ENCODE measurements at regions of chr10 and their contacts with region 1.

Region 1: GRCh38 chr10:96513698-96514561 is at the start of gene TLL2:
- DNase-seq: peak; percentile 91 to 94
- ATAC-seq: peak; percentile 93 to 95 (median 94)
- H3K4me3 ChIP-seq: peak within 1 kb of the TSS; percentile 76
- H3K27ac ChIP-seq: peak within 1 kb of the TSS; percentile 58
- H3K4me1 ChIP-seq: peaks cover 19% of the 10 kb centered on the region
- H3K27me3 ChIP-seq: no peaks in the 10 kb centered on the region
- CTCF ChIP-seq: peak; percentile 71
- total RNA-seq, gene TLL2: 0.30 to 0.41 (median 0.33) TPM

Region 2: GRCh38 chr10:96306516-96306915 is 207.4 kb before region 1 on chr10:
- intact Hi-C with region 1: no loop called
- DNase-seq: peak; percentile 29 to 73
- ATAC-seq: peak; percentile 44 to 80 (median 63)
- H3K4me3 ChIP-seq: no peak overlapping the region
- H3K27ac ChIP-seq: no peak overlapping the region
- H3K4me1 ChIP-seq: no peaks in the 10 kb centered on the region
- H3K27me3 ChIP-seq: peaks cover 0 to 3% (median 2%) of the 10 kb centered on the region in 3 donors
- CTCF ChIP-seq: no peak

Region 3: DNA sequence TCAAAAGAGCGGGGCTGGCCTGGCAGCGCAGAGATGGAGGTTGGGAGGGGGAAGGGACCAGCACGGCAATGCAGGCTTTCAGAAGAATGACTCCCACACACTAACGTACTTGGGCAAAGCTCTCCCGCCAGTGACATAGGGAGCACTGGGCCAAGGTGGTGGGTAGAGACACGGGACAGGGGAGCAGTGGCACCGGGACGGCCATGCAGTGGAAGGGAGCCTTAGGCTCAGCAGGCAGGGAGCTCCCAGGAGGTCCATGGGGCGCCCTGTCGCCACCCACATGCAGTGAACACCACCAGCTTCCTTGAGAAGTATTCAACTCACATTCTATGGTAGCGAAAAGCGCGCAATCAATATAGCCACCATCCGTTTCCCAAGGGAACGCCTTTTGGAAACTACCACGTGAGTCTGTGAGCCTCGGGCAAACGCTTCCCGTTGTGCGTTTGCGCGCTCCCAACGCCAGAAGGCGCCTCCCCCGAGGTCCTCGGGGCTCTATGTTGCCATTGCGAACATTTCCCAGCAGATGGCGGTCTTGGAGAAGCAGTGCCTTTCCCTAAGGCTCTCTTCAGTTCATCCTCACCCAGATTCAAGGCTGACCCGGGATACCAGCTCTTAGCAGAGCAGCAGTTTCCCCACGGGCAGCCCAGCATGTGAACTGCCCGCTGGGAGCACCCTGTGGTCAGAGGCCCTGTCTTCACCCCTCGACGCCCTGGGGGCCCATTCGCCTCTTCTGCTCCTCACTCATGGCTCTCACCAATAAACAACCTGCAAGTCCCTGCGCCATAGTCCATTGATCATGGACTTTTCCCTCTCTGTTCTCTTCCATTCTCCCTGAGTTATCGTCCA is 138.7 kb before region 1 on chr10:
- intact Hi-C with region 1: loop called in 1 of 2 experiments (anchors 5 kb)
- DNase-seq: peak; percentile 85 to 92
- ATAC-seq: peak; percentile 92 to 98 (median 95)
- H3K4me3 ChIP-seq: peak overlapping the region; percentile 69
- H3K27ac ChIP-seq: no peak overlapping the region
- H3K4me1 ChIP-seq: no peaks in the 10 kb centered on the region
- H3K27me3 ChIP-seq: no peaks in the 10 kb centered on the region
- CTCF ChIP-seq: peak; percentile 98

Region 4: DNA sequence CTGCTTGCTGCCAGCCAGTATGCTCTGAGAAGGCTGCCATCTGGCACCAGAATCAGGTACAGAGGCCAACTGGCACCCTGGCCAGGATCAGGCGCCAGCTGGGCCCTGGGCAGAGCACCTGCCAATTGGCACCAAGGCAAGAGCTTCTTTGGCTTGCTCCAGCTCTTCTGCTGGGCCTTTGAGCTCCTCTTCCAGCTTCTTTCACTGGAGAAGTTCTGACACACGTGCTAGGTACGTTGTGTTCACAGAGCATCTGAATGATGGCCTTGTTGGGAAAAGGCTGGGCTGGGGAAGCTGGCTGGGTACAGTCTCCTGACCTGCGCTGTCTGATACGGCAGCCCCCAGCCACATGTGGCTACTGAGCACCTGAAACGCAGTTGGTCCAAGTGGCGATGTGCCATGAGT is 123.5 kb before region 1 on chr10:
- intact Hi-C with region 1: loop called (anchors 5 kb)
- DNase-seq: peak; percentile 72 to 93
- ATAC-seq: peak; percentile 96 to 99 (median 98)
- H3K4me3 ChIP-seq: no peak overlapping the region
- H3K27ac ChIP-seq: no peak overlapping the region
- H3K4me1 ChIP-seq: peaks cover 13% of the 10 kb centered on the region
- H3K27me3 ChIP-seq: peaks cover 0 to 2% (median 0%) of the 10 kb centered on the region in 3 donors
- CTCF ChIP-seq: no peak

Region 5: DNA sequence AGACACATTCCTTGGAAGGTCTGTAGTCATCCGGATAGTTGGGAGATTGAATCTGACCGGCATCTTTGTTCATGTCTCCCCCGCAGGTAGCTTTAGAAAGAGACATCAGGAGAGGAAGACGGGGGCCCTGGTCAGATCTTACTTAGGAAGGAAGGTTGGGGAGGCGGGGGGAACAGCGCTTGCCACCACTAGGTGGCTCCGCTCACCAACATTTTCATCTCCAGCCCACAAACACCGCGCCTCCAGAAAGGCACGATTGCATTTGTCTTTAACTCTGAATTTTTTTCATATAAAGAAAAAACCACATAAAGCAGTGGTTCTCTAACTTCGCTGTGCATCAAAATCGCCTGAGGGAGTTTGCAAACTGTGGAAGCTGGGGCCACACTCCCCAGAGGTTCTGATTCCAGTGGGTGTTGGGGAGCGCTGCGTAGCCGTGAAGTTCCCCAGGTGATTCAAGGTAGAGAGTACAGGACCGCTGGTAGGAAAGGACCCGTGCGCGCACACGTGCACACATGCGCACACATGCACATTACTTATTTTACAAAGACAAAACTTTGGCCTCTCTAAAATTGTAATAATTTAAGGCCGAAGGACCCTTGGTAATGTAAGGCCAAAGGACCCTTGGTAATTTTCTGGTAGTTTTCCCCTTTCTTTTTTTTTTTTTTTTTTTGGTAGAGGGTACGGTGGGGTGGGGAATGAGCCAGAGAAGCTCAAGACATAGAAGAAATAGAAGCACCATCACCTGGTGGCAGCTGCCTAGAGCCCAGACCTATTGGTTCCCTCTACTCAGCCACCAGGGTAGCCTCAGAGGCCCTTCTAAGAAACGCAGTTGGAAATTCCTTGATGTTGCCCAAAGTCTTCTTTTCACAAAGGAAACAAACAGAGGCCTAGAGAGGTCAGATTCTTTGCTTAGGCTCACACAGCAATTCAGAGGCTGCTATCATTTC is 117.7 kb before region 1 on chr10:
- intact Hi-C with region 1: loop called (anchors 5 kb)
- DNase-seq: peak; percentile 56 to 80
- ATAC-seq: peak; percentile 75 to 94 (median 83)
- H3K4me3 ChIP-seq: no peak overlapping the region
- H3K27ac ChIP-seq: no peak overlapping the region
- H3K4me1 ChIP-seq: no peaks in the 10 kb centered on the region
- H3K27me3 ChIP-seq: peaks cover 0 to 2% (median 0%) of the 10 kb centered on the region in 3 donors
- CTCF ChIP-seq: peak; percentile 86

Measured in psoas muscle (tissue), 8 donors.